ENCODE measurements at regions of chr5 and their contacts with region 1.

Region 1: DNA sequence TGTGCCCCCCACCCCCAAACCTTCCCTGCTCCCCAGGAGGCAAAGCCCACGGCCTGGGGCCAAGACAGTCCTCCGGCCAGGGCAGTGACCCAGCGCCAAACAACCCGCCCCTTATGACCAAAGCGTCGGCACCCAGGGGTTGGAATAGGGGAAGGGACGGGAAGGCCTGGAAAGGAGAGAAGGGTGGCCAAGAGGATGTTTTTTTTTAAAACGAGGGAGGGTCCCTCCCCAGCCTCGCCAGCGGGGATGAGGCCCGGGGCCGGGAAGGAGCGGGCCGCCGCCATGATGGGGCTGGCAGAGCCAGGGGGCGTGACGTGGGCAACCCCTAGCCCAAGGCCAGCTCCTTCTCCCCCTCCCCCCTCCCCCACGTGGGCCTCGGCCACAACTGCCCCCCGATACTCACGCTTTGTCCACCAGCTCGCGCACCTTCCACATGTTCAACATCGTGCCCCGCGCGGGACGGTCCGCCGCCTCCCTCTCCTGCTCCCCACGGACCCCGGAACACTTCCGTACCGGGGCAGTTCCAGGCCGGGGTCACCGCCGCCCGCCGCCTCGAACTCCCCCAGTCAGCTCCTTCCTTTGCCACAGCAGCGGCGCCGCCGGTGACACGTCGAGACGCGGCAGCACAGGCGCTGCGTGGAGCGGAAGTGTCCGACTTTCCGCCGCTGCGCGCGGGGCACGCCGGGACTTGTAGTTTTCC is at the start of gene CLINT1:
- DNase-seq: peak; percentile 94 to 98 (median 97)
- ATAC-seq: peak; percentile 98
- H3K4me3 ChIP-seq: peak within 1 kb of the TSS; percentile 96
- H3K27ac ChIP-seq: peak within 1 kb of the TSS; percentile 83
- H3K4me1 ChIP-seq: no peaks in the 10 kb centered on the region
- H3K27me3 ChIP-seq: no peaks in the 10 kb centered on the region
- total RNA-seq, gene CLINT1: 58.6 to 77.0 (median 61.2) TPM

Region 2: DNA sequence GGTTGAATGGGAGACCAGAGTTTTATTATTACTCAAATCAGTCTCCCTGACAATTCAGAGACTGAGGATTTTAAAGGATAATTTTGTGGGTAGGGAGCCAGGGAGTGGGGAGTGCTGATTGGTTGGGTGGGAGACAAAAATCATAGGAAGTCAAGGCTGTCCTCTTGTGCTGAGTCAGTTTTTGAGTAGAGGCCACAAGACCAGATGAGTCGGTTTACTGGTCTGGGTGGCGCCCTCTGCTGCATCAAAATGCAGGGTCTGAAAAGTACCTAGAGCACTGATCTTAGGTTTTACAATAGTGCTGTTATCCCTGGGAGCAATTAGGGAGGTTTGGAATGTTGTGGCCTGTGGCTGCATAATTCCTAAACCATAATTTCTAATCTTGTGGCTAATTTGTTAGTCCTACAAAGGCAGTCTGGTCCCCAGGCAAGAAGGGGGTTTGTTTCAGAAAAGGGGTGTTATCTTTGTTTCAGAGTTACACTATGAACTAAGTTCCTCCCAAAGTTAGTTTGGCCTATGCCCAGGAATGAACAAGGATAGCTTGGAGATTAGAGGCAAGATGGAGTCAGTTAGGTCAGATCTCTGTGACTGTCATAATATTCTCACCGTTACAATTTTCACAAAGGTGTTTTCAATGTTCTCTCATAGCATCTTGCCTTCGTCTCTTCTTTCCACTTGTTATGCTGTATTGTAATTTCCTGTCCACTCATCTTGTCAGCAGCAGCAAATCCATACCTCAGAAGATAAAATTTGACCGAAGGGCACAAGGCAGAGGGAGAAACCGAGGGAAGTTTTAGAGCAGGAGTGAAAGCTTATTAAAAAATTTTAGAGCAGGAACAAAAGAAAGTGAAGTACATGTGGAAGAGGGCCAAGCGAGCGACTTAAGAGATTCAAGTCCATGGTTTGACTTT is 59.5 kb after region 1 on chr5:
- intact Hi-C with region 1: loop called in 1 of 4 experiments (anchors 5 kb)
- DNase-seq: peak; percentile 70 to 87 (median 77)
- ATAC-seq: peak; percentile 32 to 58
- H3K4me3 ChIP-seq: no peak overlapping the region
- H3K27ac ChIP-seq: no peak overlapping the region
- H3K4me1 ChIP-seq: peaks cover 9% of the 10 kb centered on the region
- H3K27me3 ChIP-seq: no peaks in the 10 kb centered on the region

Region 3: DNA sequence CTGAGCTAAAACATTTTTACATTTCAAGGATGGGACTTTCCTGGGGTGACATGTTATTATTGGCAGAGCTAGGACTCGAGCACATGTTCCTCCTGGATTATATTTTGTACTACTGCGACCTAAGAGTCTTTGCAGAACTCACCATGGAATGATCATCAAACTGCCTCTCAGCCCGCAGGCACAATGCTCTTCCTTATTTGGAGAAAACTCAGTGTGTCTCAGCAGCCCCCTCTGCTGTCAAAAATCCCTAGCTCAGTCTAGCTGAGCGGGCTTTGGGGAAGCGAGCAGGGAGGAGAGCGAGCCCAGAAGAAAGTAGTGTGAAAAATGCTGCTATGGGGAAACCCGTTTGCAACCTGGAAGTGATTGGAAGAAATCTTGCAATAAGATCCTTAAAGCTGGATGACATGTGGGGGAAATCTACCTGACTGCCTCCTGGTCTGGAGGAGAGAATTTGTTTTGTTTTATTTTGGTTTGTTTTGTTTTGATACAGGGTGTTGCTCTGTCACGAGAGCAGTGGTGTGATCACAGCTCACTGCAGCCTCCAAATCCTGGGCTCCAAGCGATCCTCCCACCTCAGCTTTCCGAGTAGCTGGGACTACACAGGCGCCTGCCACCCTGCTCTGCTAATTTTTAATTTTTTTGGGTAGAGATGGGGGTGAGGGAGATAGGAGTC is 90.2 kb after region 1 on chr5:
- intact Hi-C with region 1: loop called in 1 of 4 experiments (anchors 5 kb)
- DNase-seq: peak; percentile 86 to 94 (median 89)
- ATAC-seq: peak; percentile 98 to 99
- H3K4me3 ChIP-seq: peak overlapping the region; percentile 10
- H3K27ac ChIP-seq: no peak overlapping the region
- H3K4me1 ChIP-seq: no peaks in the 10 kb centered on the region
- H3K27me3 ChIP-seq: no peaks in the 10 kb centered on the region